Left ventricle myocardium inferior (tissue), 1 donor: ENCODE measurements at regions of chr2 and their contacts with region 1.

Region 1: GRCh38 chr2:42086500-42086953 is 38.7 kb downstream of the PKDCC start:
- DNase-seq: no peak
- H3K4me3 ChIP-seq: no peak overlapping the region
- H3K27ac ChIP-seq: no peak overlapping the region
- H3K4me1 ChIP-seq: peaks cover 21% of the 10 kb centered on the region
- H3K27me3 ChIP-seq: no peaks in the 10 kb centered on the region
- CTCF ChIP-seq: peak; percentile 84

Region 2: DNA sequence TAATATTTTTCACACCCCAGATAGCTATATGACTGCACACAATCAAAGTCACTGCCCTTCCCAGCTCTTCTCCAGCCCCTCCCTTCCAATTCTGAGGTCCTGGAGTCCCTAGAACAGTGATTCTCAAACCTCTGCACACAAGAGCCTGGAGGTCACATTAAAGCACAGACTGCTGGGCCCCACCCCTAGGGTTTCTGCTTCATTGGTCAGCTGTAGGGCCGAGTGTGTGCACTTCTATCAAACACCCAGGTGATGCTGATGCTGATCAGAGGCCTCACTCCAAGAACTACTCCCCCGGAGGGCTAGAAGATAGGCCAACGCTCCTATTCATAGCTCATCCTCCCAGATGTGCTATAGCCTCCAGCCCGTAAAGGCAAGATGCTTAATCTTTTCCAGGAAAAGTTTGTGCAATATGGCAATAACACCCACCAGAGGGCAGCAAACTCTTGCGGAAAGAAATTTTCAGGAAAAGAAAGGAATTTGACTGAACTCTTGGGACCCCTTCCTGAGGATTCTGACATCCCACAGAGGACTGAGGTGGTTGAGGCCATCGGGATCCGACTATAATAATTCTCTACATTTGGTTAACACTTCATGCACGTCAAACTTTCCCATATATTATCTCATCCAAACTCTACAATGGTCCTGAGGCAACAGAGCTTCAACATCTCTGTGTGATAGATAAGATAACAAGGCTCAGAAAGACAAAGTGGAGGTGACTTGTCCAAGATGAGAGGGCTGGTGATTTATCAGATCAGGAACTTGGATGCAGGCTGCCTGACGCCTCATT is 232.9 kb before region 1 on chr2:
- intact Hi-C with region 1: loop called (anchors 5 kb)
- DNase-seq: no peak
- H3K4me3 ChIP-seq: no peak overlapping the region
- H3K27ac ChIP-seq: no peak overlapping the region
- H3K4me1 ChIP-seq: no peaks in the 10 kb centered on the region
- H3K27me3 ChIP-seq: peaks cover 13% of the 10 kb centered on the region
- CTCF ChIP-seq: peak; percentile 76

Region 3: DNA sequence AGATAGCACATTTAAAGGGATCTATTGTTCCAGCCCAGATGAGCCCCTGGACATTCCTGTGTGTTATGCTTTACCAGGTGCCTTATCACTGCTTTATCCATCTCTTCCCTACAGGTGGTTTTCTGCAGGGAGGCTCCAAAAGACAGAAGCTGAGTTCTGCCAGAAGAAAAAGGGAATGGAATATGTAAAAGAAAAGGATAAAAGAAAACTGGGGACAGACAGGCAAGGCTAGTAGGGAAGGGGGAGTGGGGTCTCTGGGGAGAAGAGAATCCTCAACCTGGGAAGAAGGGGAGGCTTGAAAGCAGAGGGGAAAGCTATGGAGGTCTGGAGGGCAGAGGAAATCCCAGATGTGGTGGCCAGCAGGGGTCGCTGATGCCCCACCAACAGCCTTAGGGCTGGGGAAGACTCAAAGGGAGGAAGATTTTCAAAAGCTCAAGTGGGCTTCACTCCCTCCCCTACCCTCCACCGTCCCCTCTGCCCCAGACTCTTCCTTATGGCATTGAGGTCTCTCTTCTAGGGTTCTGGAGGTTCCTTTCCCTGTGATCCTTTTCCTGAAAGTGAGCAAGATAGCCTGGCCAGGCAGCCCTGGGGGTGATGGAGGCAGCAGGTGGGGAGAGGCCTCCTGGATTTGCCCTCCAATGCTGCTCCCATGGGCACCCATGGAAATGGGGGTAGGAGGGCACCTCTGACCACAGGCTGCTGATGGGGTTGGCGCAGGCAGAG is 216.8 kb before region 1 on chr2:
- intact Hi-C with region 1: loop called (anchors 2 kb)
- DNase-seq: peak; percentile 79
- H3K4me3 ChIP-seq: no peak overlapping the region
- H3K27ac ChIP-seq: no peak overlapping the region
- H3K4me1 ChIP-seq: peaks cover 19% of the 10 kb centered on the region
- H3K27me3 ChIP-seq: peaks cover 7% of the 10 kb centered on the region
- CTCF ChIP-seq: peak; percentile 90

Region 4: DNA sequence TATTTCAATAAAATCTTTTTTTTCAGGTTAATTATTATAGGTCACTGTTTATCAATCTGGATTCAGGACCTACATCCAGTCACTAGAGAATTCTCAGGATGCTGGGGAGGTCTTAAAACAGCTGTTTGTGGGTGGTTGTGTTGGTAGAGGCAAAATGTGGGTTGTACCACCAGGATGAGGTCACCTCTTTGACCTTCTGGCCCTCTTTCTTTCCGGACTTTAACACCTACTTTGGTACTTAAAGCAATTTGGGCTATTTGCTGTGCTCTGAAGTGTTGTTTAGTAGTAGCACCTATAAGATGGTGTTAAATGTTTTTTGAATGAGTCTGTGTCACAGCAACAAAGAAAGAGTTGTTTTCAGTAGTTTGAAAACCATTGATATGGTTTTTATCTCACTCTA is 97.2 kb after region 1 on chr2:
- intact Hi-C with region 1: no loop called
- DNase-seq: no peak
- H3K4me3 ChIP-seq: no peak overlapping the region
- H3K27ac ChIP-seq: no peak overlapping the region
- H3K4me1 ChIP-seq: peaks cover 17% of the 10 kb centered on the region
- H3K27me3 ChIP-seq: no peaks in the 10 kb centered on the region
- CTCF ChIP-seq: no peak

Region 5: DNA sequence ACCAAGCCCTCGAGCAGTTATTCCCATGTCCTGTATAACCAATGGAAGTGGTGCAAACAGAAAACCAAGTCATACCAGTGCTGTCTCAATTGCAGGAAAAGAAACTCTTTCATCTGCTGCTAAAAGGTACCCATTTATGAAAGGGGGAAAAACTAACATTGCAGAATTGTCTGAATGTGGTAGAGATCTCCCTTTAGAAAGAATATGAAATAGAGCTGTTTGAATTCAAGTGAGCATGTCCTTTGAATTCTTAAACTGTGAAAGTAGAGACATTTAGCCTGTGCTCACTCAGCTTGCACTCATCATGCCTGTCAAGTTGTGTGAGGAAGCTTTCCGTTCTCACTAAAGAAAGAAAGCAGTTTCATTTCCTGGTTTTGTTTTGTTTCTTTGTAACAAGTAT is 170.0 kb after region 1 on chr2:
- intact Hi-C with region 1: no loop called
- DNase-seq: no peak
- H3K4me3 ChIP-seq: no peak overlapping the region
- H3K27ac ChIP-seq: peak overlapping the region; percentile 17
- H3K4me1 ChIP-seq: peaks cover 17% of the 10 kb centered on the region
- H3K27me3 ChIP-seq: no peaks in the 10 kb centered on the region
- CTCF ChIP-seq: no peak